OCI-LY7 (cell line): ENCODE measurements at regions of chr4 and their contacts with region 1.

Region 1: DNA sequence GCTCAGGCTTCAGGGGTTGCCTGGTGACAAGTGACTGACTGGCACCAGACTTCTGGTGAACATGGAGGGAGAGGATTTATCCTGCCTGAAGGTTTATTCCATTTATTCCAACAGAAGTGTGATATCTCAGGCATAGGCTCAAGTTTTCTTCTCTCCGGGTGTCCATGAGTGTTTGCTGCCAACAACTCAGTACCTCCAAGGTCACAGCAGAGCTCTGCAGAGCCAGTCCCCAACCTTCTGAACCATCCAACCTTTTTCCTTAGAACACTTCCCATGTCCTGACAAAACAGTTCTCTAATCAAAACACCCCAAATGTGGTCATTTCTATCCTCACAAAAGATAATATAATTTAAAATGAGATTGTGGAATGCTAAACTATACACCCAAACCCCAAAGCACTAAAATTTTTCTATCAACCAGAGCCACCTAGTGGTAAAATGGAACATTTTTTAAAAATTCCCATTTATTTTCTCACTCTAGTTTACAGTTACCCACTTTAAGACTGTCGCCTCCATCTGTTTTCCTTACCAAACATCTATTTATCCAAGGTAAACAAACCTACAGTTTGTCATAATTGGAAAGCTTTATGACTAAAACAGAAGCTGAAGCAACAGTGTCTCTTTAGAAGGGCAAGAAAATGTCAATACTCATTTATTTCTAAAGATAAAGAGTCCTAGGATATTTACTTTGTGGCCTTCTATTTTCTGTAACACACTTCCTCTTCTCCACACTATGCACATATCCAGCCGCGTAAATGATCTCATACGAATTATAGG is 39.6 kb downstream of the TMEM154 start:
- DNase-seq: peak; percentile 44
- H3K4me3 ChIP-seq: no peak overlapping the region
- H3K27ac ChIP-seq: no peak overlapping the region
- H3K4me1 ChIP-seq: peaks cover 97% of the 10 kb centered on the region
- CTCF ChIP-seq: peak; percentile 96

Region 2: GRCh38 chr4:152460488-152460887 is 179.8 kb before region 1 on chr4:
- CTCF ChIA-PET with region 1: interaction called, 3 read pairs
- POLR2A ChIA-PET with region 1: interaction called, 9 read pairs
- intact Hi-C with region 1: loop called (anchors 2 kb)
- DNase-seq: peak; percentile 29
- H3K4me3 ChIP-seq: no peak overlapping the region
- H3K27ac ChIP-seq: no peak overlapping the region
- H3K4me1 ChIP-seq: peaks cover 71% of the 10 kb centered on the region
- CTCF ChIP-seq: peak; percentile 74

Region 3: GRCh38 chr4:152556283-152556682 is 84.0 kb before region 1 on chr4:
- CTCF ChIA-PET with region 1: no interaction called
- POLR2A ChIA-PET with region 1: interaction called, 43 read pairs
- intact Hi-C with region 1: loop called (anchors 5 kb)
- DNase-seq: peak; percentile 67
- H3K4me3 ChIP-seq: peak overlapping the region; percentile 65
- H3K27ac ChIP-seq: peak overlapping the region; percentile 46
- H3K4me1 ChIP-seq: peaks cover 65% of the 10 kb centered on the region
- CTCF ChIP-seq: no peak

Region 4: DNA sequence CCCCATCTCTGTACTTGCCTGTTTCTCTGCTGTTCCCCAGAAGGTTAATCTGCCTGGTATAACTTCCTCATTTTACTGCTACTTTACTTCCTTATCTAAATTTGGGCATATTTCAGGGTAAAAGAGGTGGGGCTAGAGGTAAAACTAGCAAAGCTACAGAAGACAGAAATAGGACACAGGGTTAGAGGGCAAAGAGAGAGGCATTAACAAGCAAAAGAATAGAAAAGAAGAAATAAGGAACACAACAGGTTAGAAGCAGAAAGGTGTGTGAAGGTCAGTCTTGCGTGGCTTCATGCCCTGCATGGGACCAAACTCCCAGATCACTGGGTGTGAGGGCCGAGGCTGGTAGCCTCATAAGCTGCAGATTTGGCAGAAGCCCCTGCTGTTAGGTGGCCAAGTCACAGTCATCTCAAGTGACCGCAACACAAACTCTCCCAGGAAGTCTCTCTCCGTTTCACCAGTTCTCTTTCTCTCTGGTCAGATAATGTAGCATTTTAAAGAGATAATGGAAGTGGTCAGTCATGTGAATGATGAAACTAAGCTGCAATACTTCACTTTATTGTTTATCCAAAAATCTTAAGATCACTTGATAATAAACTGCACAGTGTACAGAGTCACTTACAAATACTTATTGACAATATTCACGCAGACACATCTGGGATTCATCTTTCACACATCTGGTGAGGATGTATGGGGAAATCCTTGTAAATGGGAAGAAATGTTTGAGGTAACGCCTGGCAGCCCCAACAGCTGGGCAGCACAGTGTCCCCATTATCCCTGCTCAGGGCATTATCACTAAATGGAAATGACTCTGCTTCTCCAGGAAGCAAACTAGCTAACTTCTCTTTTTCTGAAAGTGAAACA is 23.2 kb after region 1 on chr4:
- CTCF ChIA-PET with region 1: interaction called, 3 read pairs
- POLR2A ChIA-PET with region 1: interaction called, 249 read pairs
- intact Hi-C with region 1: loop called (anchors 1 kb)
- DNase-seq: peak; percentile 90
- H3K4me3 ChIP-seq: peak overlapping the region; percentile 78
- H3K27ac ChIP-seq: peak overlapping the region; percentile 98
- H3K4me1 ChIP-seq: peaks cover 86% of the 10 kb centered on the region
- CTCF ChIP-seq: no peak

Region 5: GRCh38 chr4:152735396-152735859 is 95.2 kb after region 1 on chr4:
- CTCF ChIA-PET with region 1: no interaction called
- POLR2A ChIA-PET with region 1: interaction called, 4 read pairs
- intact Hi-C with region 1: loop called (anchors 2 kb)
- DNase-seq: peak; percentile 72
- H3K4me3 ChIP-seq: no peak overlapping the region
- H3K27ac ChIP-seq: no peak overlapping the region
- H3K4me1 ChIP-seq: no peaks in the 10 kb centered on the region
- CTCF ChIP-seq: peak; percentile 93